H1 (cell line): ENCODE measurements at regions of chr17 and their contacts with region 1.

Region 1: DNA sequence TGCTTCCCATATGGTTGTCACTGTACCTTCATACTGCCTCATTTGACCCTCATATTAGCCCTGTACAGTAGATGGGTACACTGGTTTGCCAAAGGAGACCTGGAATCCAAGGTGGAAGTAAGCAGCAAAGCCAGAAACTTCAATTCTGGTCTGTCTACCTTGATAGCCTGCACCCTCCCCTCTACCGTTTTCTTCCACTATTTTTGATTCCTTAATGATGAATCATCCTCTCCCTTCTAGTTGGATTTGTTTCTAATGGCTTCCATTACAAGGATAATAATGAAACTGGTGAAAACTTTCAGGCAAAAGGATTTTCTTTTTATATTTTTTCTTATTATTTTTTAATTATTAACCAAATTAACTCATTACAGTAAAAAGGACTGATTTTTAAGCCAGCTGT is 17.3 kb downstream of the TAC4 start:
- DNase-seq: no peak
- H3K4me3 ChIP-seq: no peak overlapping the region
- H3K27ac ChIP-seq: no peak overlapping the region
- H3K4me1 ChIP-seq: peaks cover 0 to 3% (median 0%) of the 10 kb centered on the region in 4 experiments; a peak in 1 of 7 replicates
- H3K27me3 ChIP-seq: no peaks in the 10 kb centered on the region
- CTCF ChIP-seq: no peak
- EP300 ChIP-seq: no peak
- POLR2A ChIP-seq: no peak
- RAD21 ChIP-seq: no peak

Region 2: DNA sequence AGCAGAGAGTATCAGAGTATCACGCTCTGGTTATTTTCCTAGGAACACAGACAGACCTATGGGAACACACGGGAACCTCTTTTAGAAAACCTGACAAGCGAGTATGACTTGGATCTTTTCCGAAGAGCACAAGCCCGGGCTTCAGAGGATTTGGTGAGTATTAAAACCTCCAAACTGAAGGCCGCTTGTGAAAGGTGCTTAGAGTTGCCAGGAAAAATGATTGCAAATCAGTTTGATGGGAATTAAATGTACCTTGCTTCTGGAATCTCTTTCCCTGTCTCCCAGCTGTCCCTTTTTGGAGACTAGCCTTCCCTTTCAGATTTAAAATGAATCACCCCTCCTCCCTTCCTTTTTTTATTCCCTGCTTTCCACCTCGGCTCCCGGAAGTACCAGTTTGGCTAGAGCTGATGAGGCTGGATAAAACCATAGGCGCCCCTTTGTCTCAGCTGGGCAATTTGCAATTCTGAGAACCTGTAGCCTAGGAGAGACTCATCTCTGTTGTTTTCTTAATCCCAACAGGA is 14.8 kb before region 1 on chr17:
- CTCF ChIA-PET with region 1: interaction called, 4 read pairs
- POLR2A ChIA-PET with region 1: interaction called, 13 read pairs
- DNase-seq: peak in 1 of 2 experiments; percentile 58
- H3K4me3 ChIP-seq: peak overlapping the region; percentile 11 to 54 (median 21); a peak in 7 of 8 replicates
- H3K27ac ChIP-seq: peak overlapping the region; percentile 72
- H3K4me1 ChIP-seq: peaks cover 6 to 26% (median 21%) of the 10 kb centered on the region in 4 experiments; a peak in 6 of 7 replicates
- H3K27me3 ChIP-seq: no peaks in the 10 kb centered on the region
- CTCF ChIP-seq: no peak
- EP300 ChIP-seq: peak in 1 of 2 experiments; percentile 44; a peak in 1 of 3 replicates
- POLR2A ChIP-seq: peak in 1 of 2 experiments; percentile 39; a peak in 1 of 3 replicates
- RAD21 ChIP-seq: no peak

Region 3: DNA sequence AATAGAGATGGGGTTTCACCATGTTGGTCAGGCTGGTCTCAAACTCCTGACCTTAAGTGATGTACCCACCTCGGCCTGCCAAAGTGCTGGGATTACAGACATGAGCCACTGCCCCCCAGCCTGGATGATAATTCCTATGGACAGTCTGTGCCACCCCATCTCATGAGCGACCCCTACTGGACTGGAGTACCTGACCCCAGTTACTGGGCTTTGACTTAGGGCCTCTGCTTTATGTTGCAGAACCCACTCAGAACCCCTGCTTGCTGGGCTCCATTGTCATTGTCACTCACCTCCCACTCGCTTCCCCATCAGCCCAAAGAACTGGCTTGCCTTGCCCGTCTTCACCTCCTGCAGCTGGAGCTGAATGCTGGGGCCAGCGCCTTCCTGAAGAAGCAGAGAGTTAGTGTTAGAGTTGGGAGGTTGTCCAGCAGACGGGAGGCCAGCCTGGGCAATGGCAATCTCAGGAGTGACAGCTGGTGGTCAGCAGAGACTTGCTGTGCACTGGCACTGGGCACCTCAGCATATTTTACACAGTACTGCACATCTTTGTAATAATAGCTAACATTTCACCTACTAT is 13.3 kb after region 1 on chr17:
- CTCF ChIA-PET with region 1: interaction called, 11 read pairs
- POLR2A ChIA-PET with region 1: interaction called, 14 read pairs
- DNase-seq: peak in 1 of 2 experiments; percentile 82
- H3K4me3 ChIP-seq: no peak overlapping the region
- H3K27ac ChIP-seq: no peak overlapping the region
- H3K4me1 ChIP-seq: 0 out of 7 replicates have a peak, but pooled peaks cover 0 to 2% (median 0%) of the 10 kb centered on the region in 4 experiments
- H3K27me3 ChIP-seq: no peaks in the 10 kb centered on the region
- CTCF ChIP-seq: peak; percentile 72 to 80 (median 77)
- EP300 ChIP-seq: no peak
- POLR2A ChIP-seq: no peak
- RAD21 ChIP-seq: peak; percentile 64 to 73

Region 4: DNA sequence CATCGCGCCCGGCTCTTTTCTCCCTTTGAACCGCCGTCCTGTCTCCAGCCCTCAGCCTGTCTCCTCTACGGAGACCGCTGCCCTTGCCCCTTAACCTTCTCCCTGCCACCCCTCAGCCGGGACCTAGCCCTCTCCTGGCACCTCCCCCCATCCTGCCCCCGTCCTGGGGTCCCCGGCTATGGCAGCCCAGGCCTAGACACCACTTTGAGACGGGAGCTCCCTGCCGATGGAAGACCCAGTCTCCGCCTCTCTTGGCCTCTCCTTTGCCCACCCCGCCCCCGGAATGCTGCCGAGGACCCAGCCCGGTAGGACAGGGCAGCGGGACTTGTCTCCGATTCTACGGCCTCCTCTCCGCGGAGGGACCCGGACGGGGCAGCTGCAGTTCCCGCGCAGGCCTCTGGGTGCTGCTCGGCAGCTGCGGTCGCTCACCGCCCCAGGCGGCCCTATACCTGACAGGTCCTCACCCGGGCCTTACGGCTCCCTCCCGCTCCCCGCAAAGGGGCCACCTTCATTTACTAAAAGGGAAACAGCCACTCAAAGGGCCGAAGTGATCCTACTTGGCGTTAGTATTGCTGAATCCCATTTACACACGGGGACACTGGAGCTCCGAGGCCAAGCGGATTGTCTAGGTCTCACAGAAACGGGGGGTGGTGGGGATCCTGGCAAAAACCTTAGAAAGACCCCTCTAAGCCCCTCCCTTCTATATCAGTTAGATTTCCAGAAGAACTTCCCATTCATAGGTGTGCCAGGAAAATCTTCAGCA is 49.9 kb after region 1 on chr17:
- CTCF ChIA-PET with region 1: no interaction called
- POLR2A ChIA-PET with region 1: no interaction called
- DNase-seq: peak; percentile 85 to 95
- H3K4me3 ChIP-seq: peak overlapping the region; percentile 17 to 61 (median 44); a peak in 6 of 8 replicates
- H3K27ac ChIP-seq: no peak overlapping the region
- H3K4me1 ChIP-seq: peaks cover 3 to 15% (median 9%) of the 10 kb centered on the region in 4 experiments
- H3K27me3 ChIP-seq: peaks cover 0 to 4% (median 1%) of the 10 kb centered on the region in 4 experiments; a peak in 5 of 7 replicates
- CTCF ChIP-seq: peak; percentile 89 to 96 (median 91)
- EP300 ChIP-seq: 0 out of 3 replicates have a peak, but pooled peaks of 1 of the 2 experiments have one; percentile 36
- POLR2A ChIP-seq: no peak
- RAD21 ChIP-seq: peak; percentile 92 to 93